ENCODE measurements at regions of chr2 and their contacts with region 1.

Region 1: DNA sequence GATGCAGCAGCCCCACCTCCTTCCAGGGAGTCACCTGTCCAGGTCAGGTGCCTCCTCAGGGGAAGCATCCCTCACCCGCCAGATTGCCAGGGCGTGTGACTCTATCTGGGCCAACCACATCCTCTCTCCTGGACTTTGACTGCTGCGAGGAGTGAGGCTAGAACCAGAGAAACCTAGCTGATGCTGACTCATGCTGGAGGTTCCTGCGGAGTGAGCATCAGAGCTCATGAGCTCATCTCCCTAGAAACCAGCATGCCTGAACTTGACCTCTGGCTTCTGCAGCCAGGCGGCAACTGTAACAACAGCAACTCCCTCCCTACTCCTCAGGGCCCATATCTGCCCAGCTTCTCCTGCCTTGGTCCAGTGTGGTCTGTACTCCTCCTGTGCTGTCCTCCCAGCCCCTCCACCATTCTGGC is 28.3 kb upstream of the NT5DC4 start:
- DNase-seq: no peak
- H3K4me3 ChIP-seq: no peak overlapping the region
- H3K27ac ChIP-seq: peak overlapping the region in 1 of 2 experiments; percentile 73; a peak in 2 of 4 replicates
- H3K4me1 ChIP-seq: peaks cover 5 to 21% of the 10 kb centered on the region in 2 experiments; a peak in 3 of 4 replicates
- H3K27me3 ChIP-seq: no peaks in the 10 kb centered on the region
- CTCF ChIP-seq: no peak
- EP300 ChIP-seq: no peak; a peak in 1 of 4 replicates
- RAD21 ChIP-seq: no peak

Region 2: GRCh38 chr2:112706170-112706664 is 13.7 kb after region 1 on chr2:
- CTCF ChIA-PET with region 1: interaction called, 22 read pairs
- POLR2A ChIA-PET with region 1: no interaction called
- DNase-seq: no peak
- H3K4me3 ChIP-seq: no peak overlapping the region
- H3K27ac ChIP-seq: no peak overlapping the region
- H3K4me1 ChIP-seq: no peaks in the 10 kb centered on the region
- H3K27me3 ChIP-seq: no peaks in the 10 kb centered on the region
- CTCF ChIP-seq: no peak
- EP300 ChIP-seq: no peak
- RAD21 ChIP-seq: no peak

Region 3: GRCh38 chr2:112733456-112733855 is 41.0 kb after region 1 on chr2:
- CTCF ChIA-PET with region 1: no interaction called
- POLR2A ChIA-PET with region 1: no interaction called
- DNase-seq: no peak
- H3K4me3 ChIP-seq: no peak overlapping the region
- H3K27ac ChIP-seq: no peak overlapping the region
- H3K4me1 ChIP-seq: peaks cover 0 to under 1% of the 10 kb centered on the region in 2 experiments; a peak in 1 of 4 replicates
- H3K27me3 ChIP-seq: no peaks in the 10 kb centered on the region
- CTCF ChIP-seq: no peak
- EP300 ChIP-seq: no peak
- RAD21 ChIP-seq: no peak